Activated T-helper 2 cell treated with anti-CD3 and anti-CD28 coated beads, Interferon-gamma antibody, Interleukin-2, Interleukin-4, amounts not matched to agents 10 μg/mL and 5 μg/mL and 100 μg/mL, durations not matched to agents 14 hours and 24 hours and 36 hours (primary cell): ENCODE measurements at regions of chr2 and their contacts with region 1.

Region 1: DNA sequence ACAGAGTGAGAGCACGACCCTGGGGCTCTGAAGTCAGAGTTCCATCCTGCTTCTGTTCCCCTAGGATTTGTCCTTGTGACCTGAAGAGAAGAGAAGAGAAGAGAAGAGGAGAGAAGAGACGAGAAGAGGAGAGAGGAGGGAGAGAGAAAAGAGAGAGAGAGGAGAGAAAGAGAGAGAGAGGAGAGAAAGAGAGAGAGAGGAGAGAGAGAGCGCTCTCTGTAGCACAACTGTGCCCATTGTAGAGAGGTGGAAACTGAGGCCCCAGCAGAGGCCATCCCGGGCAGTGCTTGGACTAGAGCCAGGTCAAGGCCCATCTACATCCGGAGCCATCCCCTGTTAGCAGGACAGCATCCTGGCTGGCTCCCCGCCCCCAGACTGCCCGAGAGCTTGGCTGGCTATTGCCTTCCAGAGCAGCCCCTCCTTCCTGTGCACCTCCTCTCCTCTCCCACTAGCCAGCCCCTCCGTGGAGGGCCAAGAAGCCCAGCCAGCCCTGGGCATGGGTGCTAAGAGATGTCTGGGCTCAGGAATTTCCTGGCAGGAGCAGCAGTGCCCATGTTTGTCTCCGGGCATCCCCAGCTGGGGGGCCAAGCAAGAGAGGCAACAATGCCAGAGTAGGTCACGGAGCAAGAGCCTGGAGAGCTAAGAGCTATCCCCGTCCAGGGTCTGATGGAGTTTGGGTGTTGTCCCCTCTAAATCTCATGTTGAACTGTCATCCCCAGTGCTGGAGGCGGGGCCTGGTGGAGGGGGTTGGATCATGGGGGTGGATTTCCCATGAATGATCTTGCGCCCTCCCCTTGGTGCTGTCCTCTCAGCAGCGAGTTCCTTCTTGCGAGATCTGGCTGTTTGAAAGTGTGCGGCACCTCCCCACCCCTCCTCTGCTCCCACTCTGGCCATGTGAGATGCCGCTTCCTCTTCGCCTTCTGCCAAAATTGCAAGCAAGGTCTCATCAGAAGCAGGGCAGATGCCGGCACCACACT is 18.2 kb upstream of the GPR55 start:
- DNase-seq: no peak
- H3K4me3 Mint-ChIP-seq: peak overlapping the region; percentile 3
- H3K27ac Mint-ChIP-seq: no peak overlapping the region
- H3K4me1 Mint-ChIP-seq: peaks cover 14% of the 10 kb centered on the region
- H3K27me3 Mint-ChIP-seq: peaks cover 23% of the 10 kb centered on the region

Region 2: GRCh38 chr2:230908595-230909191 is 34.5 kb before region 1 on chr2:
- intact Hi-C with region 1: loop called (anchors 5 kb)
- DNase-seq: no peak
- H3K4me3 Mint-ChIP-seq: peak overlapping the region; percentile 74
- H3K27ac Mint-ChIP-seq: peak overlapping the region; percentile 75
- H3K4me1 Mint-ChIP-seq: peaks cover 54% of the 10 kb centered on the region
- H3K27me3 Mint-ChIP-seq: peaks cover 39% of the 10 kb centered on the region

Region 3: GRCh38 chr2:230956827-230957755 is 13.9 kb after region 1 on chr2:
- intact Hi-C with region 1: loop called (anchors 2 kb)
- DNase-seq: no peak
- H3K4me3 Mint-ChIP-seq: peak overlapping the region; percentile 86
- H3K27ac Mint-ChIP-seq: peak overlapping the region; percentile 85
- H3K4me1 Mint-ChIP-seq: peaks cover 42% of the 10 kb centered on the region
- H3K27me3 Mint-ChIP-seq: peaks cover 71% of the 10 kb centered on the region